ENCODE measurements at regions of chr12 and their contacts with region 1.

Region 1: DNA sequence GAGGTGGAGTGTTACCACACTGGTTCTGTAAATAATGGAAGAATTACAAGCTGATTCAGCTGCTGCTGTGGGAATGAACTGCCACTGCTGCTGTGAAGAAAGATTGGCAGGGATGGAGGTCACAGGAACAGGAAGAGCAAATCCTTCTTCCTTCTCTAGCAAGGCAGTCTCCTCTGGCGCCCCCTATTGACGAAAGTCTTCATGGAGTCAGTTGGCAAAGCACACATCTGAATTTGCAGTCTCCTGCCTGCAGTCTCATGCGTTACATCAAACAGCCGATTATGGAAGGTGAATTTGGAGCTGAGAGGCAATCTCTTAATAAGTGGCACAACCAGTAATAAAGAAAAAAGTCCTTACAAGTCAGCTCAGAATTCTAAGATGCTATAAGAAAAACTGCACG is 106.0 kb upstream of the TMTC1 start:
- DNase-seq: peak; percentile 31 to 59
- ATAC-seq: peak in 3 of 4 donors; percentile 44 to 68 (median 59)
- H3K4me3 ChIP-seq: no peak overlapping the region
- H3K27ac ChIP-seq: no peak overlapping the region
- H3K4me1 ChIP-seq: no peaks in the 10 kb centered on the region
- H3K27me3 ChIP-seq: no peaks in the 10 kb centered on the region
- CTCF ChIP-seq: peak; percentile 58

Region 2: GRCh38 chr12:29519585-29520182 is 370.1 kb before region 1 on chr12:
- intact Hi-C with region 1: loop called in 1 of 2 experiments (anchors 10 kb)
- DNase-seq: no peak
- ATAC-seq: peak in 1 of 4 donors; percentile 55
- H3K4me3 ChIP-seq: no peak overlapping the region
- H3K27ac ChIP-seq: no peak overlapping the region
- H3K4me1 ChIP-seq: peaks cover 13% of the 10 kb centered on the region
- H3K27me3 ChIP-seq: no peaks in the 10 kb centered on the region
- CTCF ChIP-seq: peak; percentile 70

Region 3: DNA sequence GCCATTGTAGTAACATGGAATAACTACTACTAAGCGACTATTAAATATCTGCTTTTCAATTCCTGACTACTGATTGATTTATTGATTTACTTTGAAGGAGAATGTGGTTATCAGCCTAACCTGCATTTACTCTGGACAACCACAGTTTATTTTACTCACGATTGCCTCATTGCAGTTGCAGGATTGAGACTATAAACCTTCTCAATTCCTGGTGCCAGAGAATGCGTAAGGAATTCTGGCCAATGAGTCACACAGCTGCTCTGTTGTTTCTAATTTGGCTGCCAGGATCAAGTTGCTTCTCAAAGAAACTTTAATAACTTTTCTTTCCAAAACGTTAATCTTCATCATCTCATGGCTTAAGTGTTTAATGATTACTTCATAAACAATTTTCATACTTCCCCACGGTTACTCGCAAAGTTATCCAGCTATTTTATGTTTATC is 92.9 kb before region 1 on chr12:
- intact Hi-C with region 1: loop called in 1 of 2 experiments (anchors 10 kb)
- DNase-seq: no peak
- ATAC-seq: peak; percentile 89 to 99 (median 96)
- H3K4me3 ChIP-seq: peak overlapping the region; percentile 22
- H3K27ac ChIP-seq: peak overlapping the region; percentile 72
- H3K4me1 ChIP-seq: peaks cover 26% of the 10 kb centered on the region
- H3K27me3 ChIP-seq: no peaks in the 10 kb centered on the region
- CTCF ChIP-seq: no peak

Region 4: DNA sequence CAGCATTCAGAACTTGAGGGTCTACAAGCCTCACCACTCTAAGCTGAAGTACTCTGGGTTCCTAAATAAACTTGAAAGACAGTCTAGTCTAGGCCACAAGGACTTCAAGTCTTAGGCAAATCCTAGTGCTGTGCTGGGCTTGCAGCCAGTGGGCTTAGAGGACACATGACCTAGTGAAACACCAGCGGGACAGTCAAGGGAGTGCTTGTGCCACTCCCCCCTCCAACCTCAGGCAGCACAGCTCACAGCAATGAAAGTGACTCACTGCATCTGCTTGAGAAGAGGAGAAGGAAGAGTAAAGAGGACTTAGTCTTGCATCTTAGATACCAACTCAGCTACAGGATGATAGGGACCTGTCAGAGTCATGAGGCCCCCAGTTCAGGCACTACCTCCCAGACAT is 367.9 kb after region 1 on chr12:
- intact Hi-C with region 1: no loop called
- DNase-seq: no peak
- ATAC-seq: no peak
- H3K4me3 ChIP-seq: no peak overlapping the region
- H3K27ac ChIP-seq: no peak overlapping the region
- H3K4me1 ChIP-seq: no peaks in the 10 kb centered on the region
- H3K27me3 ChIP-seq: no peaks in the 10 kb centered on the region
- CTCF ChIP-seq: no peak